ENCODE measurements at regions of chr15 and their contacts with region 1.

Region 1: GRCh38 chr15:94324117-94324826 is 92.9 kb downstream of the MCTP2 start:
- DNase-seq: peak; percentile 43
- ATAC-seq: peak; percentile 94
- H3K4me3 Mint-ChIP-seq: no peak overlapping the region
- H3K27ac Mint-ChIP-seq: no peak overlapping the region
- H3K4me1 Mint-ChIP-seq: peaks cover 13% of the 10 kb centered on the region
- H3K27me3 Mint-ChIP-seq: no peaks in the 10 kb centered on the region
- CTCF ChIP-seq: peak; percentile 81

Region 2: GRCh38 chr15:94163999-94164807 is 160.1 kb before region 1 on chr15:
- CTCF ChIA-PET with region 1: interaction called, 79 read pairs
- POLR2A ChIA-PET with region 1: no interaction called
- DNase-seq: peak; percentile 67
- ATAC-seq: peak; percentile 85
- H3K4me3 Mint-ChIP-seq: no peak overlapping the region
- H3K27ac Mint-ChIP-seq: no peak overlapping the region
- H3K4me1 Mint-ChIP-seq: no peaks in the 10 kb centered on the region
- H3K27me3 Mint-ChIP-seq: no peaks in the 10 kb centered on the region
- CTCF ChIP-seq: peak; percentile 89

Region 3: GRCh38 chr15:94196531-94196930 is 127.7 kb before region 1 on chr15:
- CTCF ChIA-PET with region 1: no interaction called
- POLR2A ChIA-PET with region 1: no interaction called
- DNase-seq: no peak
- ATAC-seq: no peak
- H3K4me3 Mint-ChIP-seq: no peak overlapping the region
- H3K27ac Mint-ChIP-seq: no peak overlapping the region
- H3K4me1 Mint-ChIP-seq: no peaks in the 10 kb centered on the region
- H3K27me3 Mint-ChIP-seq: no peaks in the 10 kb centered on the region
- CTCF ChIP-seq: no peak

Region 4: GRCh38 chr15:94230956-94231722 is 93.1 kb before region 1 on chr15 and contains the start of gene MCTP2:
- CTCF ChIA-PET with region 1: interaction called, 10 read pairs
- POLR2A ChIA-PET with region 1: interaction called, 3 read pairs
- DNase-seq: peak; percentile 83
- ATAC-seq: peak; percentile 89
- H3K4me3 Mint-ChIP-seq: peak within 1 kb of the TSS; percentile 79
- H3K27ac Mint-ChIP-seq: peak within 1 kb of the TSS; percentile 39
- H3K4me1 Mint-ChIP-seq: peaks cover 50% of the 10 kb centered on the region
- H3K27me3 Mint-ChIP-seq: peaks cover 22% of the 10 kb centered on the region
- CTCF ChIP-seq: no peak
- total RNA-seq, gene MCTP2: 7.3 to 7.4 TPM (median 7.4 TPM) in 3 replicates

Region 5: DNA sequence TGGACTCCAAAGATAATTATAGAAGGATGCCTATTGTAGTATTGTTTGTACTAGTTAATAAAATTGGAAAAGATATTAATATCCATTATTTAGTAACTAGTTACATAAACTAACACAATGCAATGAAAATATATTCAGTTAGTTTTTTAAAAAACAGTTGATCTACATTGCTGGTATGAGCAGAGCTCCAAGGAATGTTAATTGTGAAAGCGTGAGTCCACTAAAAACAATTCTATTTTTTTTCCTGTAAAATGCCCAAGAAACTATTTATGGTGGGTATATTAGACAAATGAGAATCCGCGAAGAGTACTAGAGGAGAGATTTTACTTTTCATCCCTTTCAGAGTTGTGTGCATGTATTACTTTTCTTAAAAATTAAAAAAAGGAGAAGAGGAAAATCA is 11.3 kb after region 1 on chr15:
- CTCF ChIA-PET with region 1: interaction called, 18 read pairs
- POLR2A ChIA-PET with region 1: no interaction called
- DNase-seq: no peak
- ATAC-seq: no peak
- H3K4me3 Mint-ChIP-seq: no peak overlapping the region
- H3K27ac Mint-ChIP-seq: no peak overlapping the region
- H3K4me1 Mint-ChIP-seq: peaks cover 16% of the 10 kb centered on the region
- H3K27me3 Mint-ChIP-seq: no peaks in the 10 kb centered on the region
- CTCF ChIP-seq: no peak